ENCODE measurements at regions of chr16 and their contacts with region 1.

Region 1: DNA sequence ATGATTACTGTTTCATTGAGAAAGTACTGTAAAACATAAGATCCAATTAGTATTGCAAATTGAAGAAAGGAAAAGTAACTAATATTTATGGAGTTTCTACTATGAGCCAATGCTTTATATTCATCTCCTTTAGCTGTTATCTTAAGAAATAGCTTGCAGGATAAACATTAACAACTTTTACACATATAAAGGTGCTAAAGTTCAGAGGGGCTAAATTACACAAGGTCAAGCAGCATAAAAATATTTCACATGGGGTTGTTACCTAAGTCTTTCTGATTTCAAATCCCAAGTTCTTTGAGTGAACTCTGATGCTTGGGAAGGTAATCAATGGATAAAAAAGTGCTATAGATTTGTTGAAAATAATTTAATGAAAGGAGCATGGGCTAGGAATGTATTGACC is 765.5 kb downstream of the CDH8 start:
- DNase-seq: no peak
- H3K4me3 ChIP-seq: no peak overlapping the region
- H3K27ac ChIP-seq: no peak overlapping the region
- H3K4me1 ChIP-seq: peaks cover 7% of the 10 kb centered on the region
- H3K27me3 ChIP-seq: no peaks in the 10 kb centered on the region
- CTCF ChIP-seq: no peak

Region 2: GRCh38 chr16:60717808-60718207 is 552.9 kb before region 1 on chr16:
- CTCF ChIA-PET with region 1: no interaction called
- POLR2A ChIA-PET with region 1: no interaction called
- intact Hi-C with region 1: no loop called
- DNase-seq: no peak
- H3K4me3 ChIP-seq: no peak overlapping the region
- H3K27ac ChIP-seq: no peak overlapping the region
- H3K4me1 ChIP-seq: no peaks in the 10 kb centered on the region
- H3K27me3 ChIP-seq: no peaks in the 10 kb centered on the region
- CTCF ChIP-seq: no peak

Region 3: DNA sequence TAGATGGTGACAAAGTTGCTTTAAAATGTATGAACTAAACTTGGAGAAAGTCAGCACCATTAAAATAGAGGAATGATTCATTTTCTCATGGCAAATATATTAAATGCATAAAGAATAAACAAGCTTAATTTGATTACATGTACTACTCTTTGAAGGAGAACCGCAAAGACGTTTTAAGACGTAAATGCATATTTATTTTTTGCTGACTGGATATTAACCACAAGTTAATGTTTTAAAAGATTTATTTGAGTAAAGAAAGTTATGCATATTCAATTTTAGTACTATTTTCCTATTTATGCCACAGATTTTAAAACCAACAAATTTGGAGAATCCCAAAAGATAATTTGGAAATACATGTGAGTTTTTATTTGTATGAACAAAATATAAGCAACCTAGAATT is 356.4 kb before region 1 on chr16:
- CTCF ChIA-PET with region 1: no interaction called
- POLR2A ChIA-PET with region 1: no interaction called
- intact Hi-C with region 1: no loop called
- DNase-seq: no peak
- H3K4me3 ChIP-seq: no peak overlapping the region
- H3K27ac ChIP-seq: no peak overlapping the region
- H3K4me1 ChIP-seq: no peaks in the 10 kb centered on the region
- H3K27me3 ChIP-seq: peaks cover 4% of the 10 kb centered on the region
- CTCF ChIP-seq: no peak

Region 4: DNA sequence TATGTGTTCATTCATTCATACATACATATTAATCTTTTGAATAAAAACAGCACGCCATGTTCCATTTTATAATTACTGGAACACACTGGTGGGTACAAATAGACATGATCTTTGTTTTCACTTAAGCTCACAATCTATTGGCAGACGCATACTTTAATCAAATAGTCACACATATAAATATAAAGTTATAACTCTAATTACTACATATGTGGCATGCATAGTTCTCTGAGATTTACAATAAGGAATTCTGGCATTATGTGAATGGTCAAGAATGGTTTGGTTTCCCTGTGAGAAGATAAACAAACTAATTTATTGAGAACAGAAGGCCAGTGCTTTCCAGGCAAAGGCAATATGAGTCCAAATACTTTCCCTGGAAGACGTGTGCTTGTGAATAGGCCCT is 189.3 kb after region 1 on chr16:
- CTCF ChIA-PET with region 1: no interaction called
- POLR2A ChIA-PET with region 1: no interaction called
- intact Hi-C with region 1: no loop called
- DNase-seq: no peak
- H3K4me3 ChIP-seq: no peak overlapping the region
- H3K27ac ChIP-seq: no peak overlapping the region
- H3K4me1 ChIP-seq: no peaks in the 10 kb centered on the region
- H3K27me3 ChIP-seq: no peaks in the 10 kb centered on the region
- CTCF ChIP-seq: no peak

Region 5: GRCh38 chr16:61678182-61678581 is 407.5 kb after region 1 on chr16:
- CTCF ChIA-PET with region 1: interaction called, 11 read pairs
- POLR2A ChIA-PET with region 1: no interaction called
- intact Hi-C with region 1: no loop called
- DNase-seq: no peak
- H3K4me3 ChIP-seq: no peak overlapping the region
- H3K27ac ChIP-seq: no peak overlapping the region
- H3K4me1 ChIP-seq: no peaks in the 10 kb centered on the region
- H3K27me3 ChIP-seq: no peaks in the 10 kb centered on the region
- CTCF ChIP-seq: no peak

Measured in A673 (cell line).